Psoas muscle (tissue), 8 donors: ENCODE measurements at regions of chr3 and their contacts with region 1.

Region 1: GRCh38 chr3:162269636-162270458 is 773.2 kb downstream of the OTOL1 start:
- DNase-seq: no peak
- ATAC-seq: no peak
- H3K4me3 ChIP-seq: no peak overlapping the region
- H3K27ac ChIP-seq: no peak overlapping the region
- H3K4me1 ChIP-seq: no peaks in the 10 kb centered on the region
- H3K27me3 ChIP-seq: no peaks in the 10 kb centered on the region
- CTCF ChIP-seq: no peak

Region 2: GRCh38 chr3:161649900-161650484 is 619.9 kb before region 1 on chr3:
- intact Hi-C with region 1: no loop called
- DNase-seq: no peak
- ATAC-seq: no peak
- H3K4me3 ChIP-seq: no peak overlapping the region
- H3K27ac ChIP-seq: no peak overlapping the region
- H3K4me1 ChIP-seq: no peaks in the 10 kb centered on the region
- H3K27me3 ChIP-seq: no peaks in the 10 kb centered on the region
- CTCF ChIP-seq: no peak

Region 3: DNA sequence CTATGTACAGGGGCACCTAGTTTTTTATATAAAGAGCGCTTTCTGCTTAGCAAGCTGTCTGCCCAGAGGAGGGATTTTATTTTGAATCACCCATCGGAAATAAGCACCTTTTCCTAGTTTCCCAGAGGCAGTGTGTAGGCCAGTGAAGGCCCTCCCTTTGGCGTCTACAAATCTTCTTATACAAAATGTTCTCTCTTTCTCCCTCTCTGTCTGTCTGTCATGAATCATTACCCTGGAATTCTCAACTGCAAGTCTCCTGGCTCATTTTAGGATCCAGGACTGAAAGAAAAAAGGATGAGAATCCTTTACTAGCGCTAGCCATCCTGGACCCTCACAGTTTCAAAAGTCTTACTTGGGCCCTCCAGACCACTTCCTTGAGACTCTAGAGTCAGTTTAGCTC is 45.1 kb before region 1 on chr3:
- intact Hi-C with region 1: loop called in 1 of 2 experiments (anchors 2 kb)
- DNase-seq: no peak
- ATAC-seq: no peak
- H3K4me3 ChIP-seq: no peak overlapping the region
- H3K27ac ChIP-seq: no peak overlapping the region
- H3K4me1 ChIP-seq: no peaks in the 10 kb centered on the region
- H3K27me3 ChIP-seq: no peaks in the 10 kb centered on the region
- CTCF ChIP-seq: no peak